ENCODE measurements at regions of chr15 and their contacts with region 1.

Region 1: DNA sequence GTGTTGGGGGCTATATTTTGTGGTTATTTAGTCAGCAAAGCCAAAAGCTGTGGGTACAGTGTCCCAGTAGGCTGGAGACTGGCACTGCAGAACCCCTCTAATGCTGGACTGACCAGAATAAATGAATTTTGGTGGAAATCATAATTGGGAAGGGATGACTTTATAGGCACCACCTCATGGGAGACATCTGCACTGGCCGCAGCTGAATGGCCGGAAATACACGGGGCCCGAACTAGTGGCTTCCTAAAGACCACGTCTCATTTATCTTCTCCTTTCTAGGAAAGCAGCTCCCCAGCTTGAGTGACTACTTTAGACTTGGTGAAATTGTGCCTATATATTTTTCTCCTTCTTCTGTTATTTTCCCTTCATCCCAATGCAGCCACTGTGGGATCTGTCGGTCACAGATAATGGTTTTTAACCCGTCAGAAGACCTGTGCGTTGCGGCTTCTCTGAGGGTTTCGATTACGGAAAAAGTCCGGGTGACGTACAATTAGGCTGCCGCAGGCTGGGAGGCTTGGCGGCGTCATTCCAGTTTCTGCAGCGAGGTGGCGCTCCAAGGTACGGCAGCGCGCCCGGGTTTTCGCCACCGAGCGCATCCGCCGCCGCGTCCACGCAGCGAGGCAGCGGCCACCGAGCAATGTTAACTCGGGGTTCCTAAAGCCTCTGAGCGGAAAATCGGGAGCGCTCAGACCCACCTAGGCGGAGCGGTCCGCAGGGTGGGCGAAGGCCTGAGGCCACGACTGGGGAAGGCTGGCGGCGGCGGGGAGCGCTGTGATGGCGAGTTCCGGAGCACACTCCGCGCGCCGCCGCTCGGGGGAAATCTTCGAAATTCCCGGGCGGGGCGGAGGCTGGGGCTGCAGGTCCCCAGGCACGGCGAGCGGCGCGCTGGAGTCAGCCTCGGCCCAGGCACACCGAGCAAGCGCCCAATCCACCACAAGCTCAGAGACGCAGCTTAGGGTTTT is 26.3 kb downstream of the NR2F2 start:
- DNase-seq: peak; percentile 88
- H3K4me3 ChIP-seq: peak overlapping the region; percentile 46 to 81 (median 65)
- H3K27ac ChIP-seq: peak overlapping the region; percentile 76
- H3K4me1 ChIP-seq: peaks cover 71% of the 10 kb centered on the region
- H3K27me3 ChIP-seq: no peaks in the 10 kb centered on the region
- CTCF ChIP-seq: peak; percentile 94 to 98
- POLR2A ChIP-seq: no peak

Region 2: GRCh38 chr15:94607176-94607654 is 1749.6 kb before region 1 on chr15:
- CTCF ChIA-PET with region 1: interaction called, 3 read pairs
- POLR2A ChIA-PET with region 1: no interaction called
- dilution Hi-C with region 1: no loop called
- intact Hi-C with region 1: loop called (anchors 2 kb)
- DNase-seq: peak; percentile 96
- H3K4me3 ChIP-seq: no peak overlapping the region
- H3K27ac ChIP-seq: peak overlapping the region; percentile 97
- H3K4me1 ChIP-seq: peaks cover 40% of the 10 kb centered on the region
- H3K27me3 ChIP-seq: no peaks in the 10 kb centered on the region
- CTCF ChIP-seq: no peak
- POLR2A ChIP-seq: peak; percentile 75

Region 3: DNA sequence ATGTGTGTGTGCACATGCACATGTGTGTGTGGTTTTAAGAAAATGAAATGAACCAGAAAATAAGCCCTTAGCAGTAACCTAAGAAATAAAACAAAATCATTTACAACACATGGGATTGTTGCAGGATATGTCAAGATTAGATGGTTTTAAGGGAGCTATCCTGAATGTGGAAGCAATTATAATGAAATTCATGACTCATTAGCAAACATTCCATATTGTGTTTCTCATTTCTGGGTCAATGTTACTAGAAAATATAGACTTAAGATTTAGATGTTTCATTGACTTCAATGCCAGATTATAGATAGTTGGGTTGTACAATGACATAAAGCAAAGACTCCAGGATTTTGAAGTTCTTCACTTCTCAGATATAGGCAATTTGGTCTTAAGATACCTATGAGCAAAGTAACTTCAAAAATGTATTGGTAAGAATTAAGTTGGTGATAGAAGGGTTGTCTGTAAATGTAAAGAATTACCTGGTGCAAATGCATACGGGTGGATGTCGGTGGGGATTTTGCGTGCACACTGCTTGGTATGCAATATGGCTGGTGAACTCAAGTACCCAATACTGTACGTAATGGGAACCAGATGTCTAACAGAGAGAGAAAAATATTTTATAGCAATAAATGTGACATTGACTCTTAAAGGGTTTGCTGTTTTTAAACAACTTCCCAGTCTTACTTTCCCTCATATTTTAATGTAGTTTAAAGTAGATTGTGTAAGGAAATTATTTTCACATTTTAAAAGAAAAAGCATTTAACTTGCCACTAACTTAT is 80.2 kb before region 1 on chr15:
- CTCF ChIA-PET with region 1: no interaction called
- POLR2A ChIA-PET with region 1: no interaction called
- dilution Hi-C with region 1: no loop called
- intact Hi-C with region 1: no loop called
- DNase-seq: peak; percentile 40
- H3K4me3 ChIP-seq: no peak overlapping the region
- H3K27ac ChIP-seq: peak overlapping the region; percentile 7
- H3K4me1 ChIP-seq: peaks cover 41% of the 10 kb centered on the region
- H3K27me3 ChIP-seq: no peaks in the 10 kb centered on the region
- CTCF ChIP-seq: no peak
- POLR2A ChIP-seq: no peak

Region 4: DNA sequence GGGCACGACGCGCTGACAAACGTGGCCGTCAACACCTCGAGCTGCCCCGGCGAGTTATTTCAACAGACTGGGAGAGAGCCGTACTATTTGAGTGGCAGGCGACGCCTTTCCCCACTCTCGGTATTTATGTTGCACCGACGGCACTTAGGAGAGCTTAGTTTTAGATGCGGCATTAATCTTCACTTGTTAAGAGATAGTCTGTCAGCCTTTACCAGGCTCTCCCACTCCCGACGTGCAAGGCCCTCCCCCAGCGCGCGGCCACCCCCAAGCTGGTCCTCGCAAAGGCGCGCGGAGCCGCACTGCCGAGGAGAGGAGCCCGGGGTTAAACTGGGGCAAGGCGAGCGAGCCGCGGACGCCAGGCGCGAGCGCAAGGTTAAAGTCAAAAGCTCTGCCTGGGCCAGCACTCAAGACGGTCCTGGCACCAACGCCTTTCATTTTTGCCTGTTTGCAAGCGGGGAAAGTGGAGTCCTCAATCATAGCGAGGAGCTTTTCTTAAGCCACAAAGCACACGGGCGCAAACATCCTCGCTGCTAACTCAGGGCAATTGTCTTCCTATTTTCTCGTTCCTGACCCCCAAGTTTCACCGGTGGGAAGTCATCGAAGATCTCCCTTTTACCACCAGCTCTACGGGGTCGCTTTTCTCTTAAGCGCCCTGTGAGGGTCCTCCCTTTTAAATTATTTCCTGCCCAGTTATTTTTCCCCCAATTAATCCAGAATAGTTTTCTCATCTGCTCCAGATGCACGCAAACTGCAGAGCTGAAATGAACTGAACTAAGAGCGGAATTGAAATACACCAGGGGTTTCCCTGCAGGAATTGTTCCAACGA is 60.4 kb after region 1 on chr15:
- CTCF ChIA-PET with region 1: interaction called, 8 read pairs
- POLR2A ChIA-PET with region 1: no interaction called
- dilution Hi-C with region 1: no loop called
- intact Hi-C with region 1: loop called (anchors 2 kb)
- DNase-seq: peak; percentile 47
- H3K4me3 ChIP-seq: peak overlapping the region; percentile 23 to 44 (median 29)
- H3K27ac ChIP-seq: no peak overlapping the region
- H3K4me1 ChIP-seq: peaks cover 21% of the 10 kb centered on the region
- H3K27me3 ChIP-seq: peaks cover 8 to 16% of the 10 kb centered on the region in 2 experiments
- CTCF ChIP-seq: no peak
- POLR2A ChIP-seq: no peak

Region 5: DNA sequence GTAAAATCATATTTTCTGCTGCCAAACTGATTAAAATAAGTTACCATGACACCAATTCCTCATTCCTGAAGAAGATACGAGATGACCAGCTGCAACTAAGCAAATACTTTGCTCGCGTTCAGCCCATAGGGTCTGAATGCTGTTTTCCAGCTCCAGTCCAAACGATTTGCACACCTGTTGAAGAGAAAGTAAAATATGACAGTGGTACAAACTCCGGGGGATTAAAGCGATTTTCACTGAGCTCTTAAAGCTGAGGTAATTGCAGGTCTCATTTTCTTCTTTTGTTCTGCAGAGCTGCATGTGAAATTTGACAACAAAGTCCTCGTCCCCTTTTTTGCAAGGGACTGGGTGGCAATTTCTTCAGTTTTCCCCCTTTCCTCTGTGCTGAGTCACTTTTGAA is 92.1 kb after region 1 on chr15:
- CTCF ChIA-PET with region 1: no interaction called
- POLR2A ChIA-PET with region 1: no interaction called
- dilution Hi-C with region 1: no loop called
- intact Hi-C with region 1: no loop called
- DNase-seq: no peak
- H3K4me3 ChIP-seq: no peak overlapping the region
- H3K27ac ChIP-seq: no peak overlapping the region
- H3K4me1 ChIP-seq: no peaks in the 10 kb centered on the region
- H3K27me3 ChIP-seq: no peaks in the 10 kb centered on the region
- CTCF ChIP-seq: no peak
- POLR2A ChIP-seq: no peak

Region 6: DNA sequence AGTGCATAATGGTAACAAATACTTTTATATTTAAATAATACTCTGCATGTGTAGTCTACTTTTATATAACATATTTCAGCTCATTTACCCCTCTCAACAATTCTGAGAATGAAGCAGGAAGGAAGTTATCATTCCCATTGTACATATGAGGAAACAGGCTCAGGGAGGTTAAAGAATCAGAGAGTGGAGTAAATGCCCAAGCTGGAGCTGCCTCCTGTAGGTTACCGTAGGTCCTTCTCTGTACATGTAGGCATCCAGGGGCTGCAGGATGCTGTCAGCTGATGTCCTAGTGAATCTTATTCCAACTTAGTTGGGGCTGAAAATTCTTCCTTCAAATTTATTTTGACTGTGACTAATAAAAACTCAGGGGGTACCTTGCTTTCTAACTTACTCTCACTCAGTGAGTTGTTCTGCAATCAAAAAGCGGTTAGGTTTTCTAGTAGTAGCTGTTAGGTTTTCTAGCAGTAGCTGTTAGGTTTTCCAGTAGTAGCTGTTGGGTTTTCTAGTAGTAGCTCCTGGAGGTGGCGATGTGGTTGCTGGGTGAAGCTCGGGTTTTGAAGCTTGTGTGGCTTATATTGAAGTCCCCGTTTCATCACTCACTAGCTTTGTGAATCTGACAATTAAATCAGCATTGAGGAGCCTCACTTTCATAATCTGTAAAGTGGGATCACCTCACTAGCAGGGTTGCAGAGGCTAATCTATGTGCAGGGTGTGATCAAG is 330.8 kb after region 1 on chr15:
- CTCF ChIA-PET with region 1: no interaction called
- POLR2A ChIA-PET with region 1: no interaction called
- dilution Hi-C with region 1: no loop called
- intact Hi-C with region 1: loop called (anchors 5 kb)
- DNase-seq: peak; percentile 30
- H3K4me3 ChIP-seq: no peak overlapping the region
- H3K27ac ChIP-seq: no peak overlapping the region
- H3K4me1 ChIP-seq: no peaks in the 10 kb centered on the region
- H3K27me3 ChIP-seq: no peaks in the 10 kb centered on the region
- CTCF ChIP-seq: no peak
- POLR2A ChIP-seq: no peak

Region 7: DNA sequence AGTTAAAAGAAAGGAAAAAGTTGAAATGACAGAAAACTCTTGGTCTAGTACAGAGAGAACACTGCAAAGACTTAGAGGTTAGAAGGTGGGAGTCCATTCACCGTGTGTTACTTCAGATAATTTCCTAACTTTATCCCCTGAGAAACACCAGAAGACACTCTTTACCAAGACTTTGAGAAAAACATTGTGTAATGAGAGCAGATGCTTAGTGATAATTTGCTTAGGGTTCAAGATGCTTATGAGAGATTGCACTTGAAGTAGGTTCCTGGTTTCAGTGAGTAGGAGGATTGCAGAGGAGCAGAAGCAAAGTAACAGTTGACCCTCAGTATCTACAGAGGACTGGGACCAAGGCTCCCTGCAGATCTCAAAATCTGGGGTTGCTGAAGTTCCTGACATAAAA is 567.8 kb after region 1 on chr15:
- CTCF ChIA-PET with region 1: no interaction called
- POLR2A ChIA-PET with region 1: no interaction called
- dilution Hi-C with region 1: no loop called
- intact Hi-C with region 1: no loop called
- DNase-seq: no peak
- H3K4me3 ChIP-seq: no peak overlapping the region
- H3K27ac ChIP-seq: no peak overlapping the region
- H3K4me1 ChIP-seq: no peaks in the 10 kb centered on the region
- H3K27me3 ChIP-seq: no peaks in the 10 kb centered on the region
- CTCF ChIP-seq: no peak
- POLR2A ChIP-seq: no peak

Region 8: DNA sequence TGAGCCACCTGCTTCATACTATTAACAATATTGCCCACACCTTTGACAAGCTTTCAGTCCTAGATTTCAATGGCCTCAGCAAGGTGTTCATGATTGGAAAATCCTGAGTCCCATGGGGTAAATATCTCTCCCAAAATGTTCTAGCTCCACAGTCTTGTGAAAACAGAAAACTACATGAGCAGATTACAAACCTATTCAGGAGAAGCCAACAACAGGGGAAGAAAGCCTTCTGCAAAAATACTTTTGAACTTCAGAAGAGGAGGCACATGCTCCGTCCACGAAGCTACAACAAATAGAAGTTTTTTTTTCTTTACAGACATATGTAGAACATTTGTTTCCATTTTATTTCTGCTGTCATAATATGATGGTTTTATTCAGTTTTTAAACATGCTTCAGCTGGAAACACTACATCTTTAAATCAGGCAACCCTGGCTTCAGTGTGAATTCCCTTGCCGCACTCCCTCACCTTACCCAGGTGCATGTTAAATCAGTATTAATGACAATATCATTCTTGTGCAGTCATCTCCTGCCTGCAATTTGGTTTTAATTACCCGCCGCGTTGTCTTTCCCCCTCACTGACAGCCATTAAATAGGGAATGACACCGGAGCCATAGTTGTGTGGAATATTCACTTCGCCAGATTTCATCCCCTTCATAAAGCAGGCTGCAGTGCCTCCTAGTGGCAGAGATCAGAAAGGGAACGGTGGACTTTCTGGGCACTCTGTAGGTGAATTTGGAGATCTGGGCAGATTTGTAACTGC is 878.3 kb after region 1 on chr15:
- CTCF ChIA-PET with region 1: interaction called, 61 read pairs
- POLR2A ChIA-PET with region 1: no interaction called
- dilution Hi-C with region 1: no loop called
- intact Hi-C with region 1: loop called (anchors 1 kb)
- DNase-seq: peak; percentile 71
- H3K4me3 ChIP-seq: no peak overlapping the region
- H3K27ac ChIP-seq: no peak overlapping the region
- H3K4me1 ChIP-seq: no peaks in the 10 kb centered on the region
- H3K27me3 ChIP-seq: peaks cover 0 to 2% of the 10 kb centered on the region in 2 experiments
- CTCF ChIP-seq: peak; percentile 75 to 90
- POLR2A ChIP-seq: no peak

Region 9: DNA sequence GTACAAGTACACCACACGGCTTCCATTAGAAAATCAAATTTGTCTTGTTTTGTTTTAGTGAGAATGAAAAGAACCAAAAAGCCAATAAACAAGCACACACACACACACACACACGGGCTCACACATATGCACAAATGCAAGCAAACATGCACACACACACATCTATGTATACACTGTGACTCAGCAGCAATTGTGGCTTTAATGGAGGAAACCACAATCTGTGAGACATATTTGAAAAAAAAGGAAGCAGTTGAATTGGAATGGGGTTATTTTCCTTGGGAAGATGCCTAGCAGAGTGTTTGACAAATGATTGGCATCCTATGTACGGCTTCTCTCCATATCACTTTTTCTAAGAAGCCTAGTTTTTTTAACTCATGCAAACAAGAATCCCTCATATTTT is 1402.6 kb after region 1 on chr15:
- CTCF ChIA-PET with region 1: interaction called, 8 read pairs
- POLR2A ChIA-PET with region 1: no interaction called
- dilution Hi-C with region 1: no loop called
- intact Hi-C with region 1: loop called (anchors 2 kb)
- DNase-seq: peak; percentile 62
- H3K4me3 ChIP-seq: no peak overlapping the region
- H3K27ac ChIP-seq: no peak overlapping the region
- H3K4me1 ChIP-seq: peaks cover 4% of the 10 kb centered on the region
- H3K27me3 ChIP-seq: peaks cover 4 to 18% of the 10 kb centered on the region in 2 experiments
- CTCF ChIP-seq: no peak
- POLR2A ChIP-seq: no peak

Measured in endothelial cell of umbilical vein (primary cell).